ENCODE measurements at regions of chr17 and their contacts with region 1.

Region 1: DNA sequence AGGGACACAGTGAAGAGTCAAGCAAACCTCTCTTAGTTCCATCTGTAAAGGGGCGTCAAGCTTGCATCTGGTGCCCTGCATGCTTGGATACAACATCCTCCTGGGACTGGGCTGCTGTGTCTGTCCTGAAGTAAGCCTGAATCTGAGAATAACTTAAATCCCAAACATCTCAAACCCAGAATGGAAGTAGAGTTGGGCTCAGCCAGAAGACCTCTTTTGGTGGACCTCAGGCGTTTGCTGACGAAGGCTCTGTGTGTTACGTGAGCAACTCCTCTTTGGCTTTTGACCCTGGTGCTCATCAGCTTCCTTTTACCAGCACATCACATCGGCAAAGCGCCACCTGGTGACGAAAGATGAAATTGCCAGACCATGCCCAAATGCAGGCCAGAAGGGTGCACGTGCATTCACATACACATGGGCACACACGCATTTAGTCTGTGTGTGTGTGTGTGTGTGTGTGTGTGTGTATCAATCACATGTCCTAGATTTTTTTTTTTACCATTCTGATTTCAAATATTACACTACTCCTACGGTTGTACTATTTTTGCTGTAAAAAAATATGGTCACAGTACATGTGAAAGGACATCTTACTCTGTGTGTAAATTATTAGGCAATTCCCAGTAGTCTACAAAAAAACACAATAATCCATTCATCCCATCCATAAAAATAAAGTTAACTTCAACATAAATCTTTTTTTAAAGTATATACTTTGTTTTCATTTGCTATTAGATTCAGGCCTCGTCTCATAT is 41.1 kb upstream of the FOXJ1 start:
- DNase-seq: peak; percentile 94
- ATAC-seq: peak; percentile 90
- H3K4me3 Mint-ChIP-seq: no peak overlapping the region
- H3K27ac Mint-ChIP-seq: no peak overlapping the region
- H3K4me1 Mint-ChIP-seq: peaks cover 9% of the 10 kb centered on the region
- H3K27me3 Mint-ChIP-seq: peaks cover 4% of the 10 kb centered on the region; the same call in 1 of the 2 replicates
- CTCF ChIP-seq: peak; percentile 83

Region 2: GRCh38 chr17:76121932-76122430 is 60.2 kb before region 1 on chr17:
- CTCF ChIA-PET with region 1: interaction called, 61 read pairs
- POLR2A ChIA-PET with region 1: no interaction called
- DNase-seq: peak; percentile 54
- ATAC-seq: peak; percentile 5; the same call in 1 of the 2 replicates
- H3K4me3 Mint-ChIP-seq: no peak overlapping the region; the same call in 1 of the 2 replicates
- H3K27ac Mint-ChIP-seq: peak overlapping the region; percentile 19; the same call in 1 of the 2 replicates
- H3K4me1 Mint-ChIP-seq: peaks cover 39% of the 10 kb centered on the region
- H3K27me3 Mint-ChIP-seq: no peaks in the 10 kb centered on the region; the same call in none of the 2 replicates
- CTCF ChIP-seq: no peak

Region 3: GRCh38 chr17:76141212-76142038 is 40.8 kb before region 1 on chr17 and contains the start of gene FOXJ1:
- CTCF ChIA-PET with region 1: interaction called, 34 read pairs
- POLR2A ChIA-PET with region 1: no interaction called
- DNase-seq: peak; percentile 97
- ATAC-seq: peak; percentile 61
- H3K4me3 Mint-ChIP-seq: peak within 1 kb of the TSS; percentile 82
- H3K27ac Mint-ChIP-seq: no peak within 1 kb of the TSS
- H3K4me1 Mint-ChIP-seq: peaks cover 81% of the 10 kb centered on the region
- H3K27me3 Mint-ChIP-seq: peaks cover 67% of the 10 kb centered on the region
- CTCF ChIP-seq: no peak
- total RNA-seq, gene FOXJ1: 6.2 to 11.8 TPM (median 6.8 TPM) in 3 replicates

Region 4: GRCh38 chr17:76166168-76166567 is 16.0 kb before region 1 on chr17:
- CTCF ChIA-PET with region 1: interaction called, 12 read pairs
- POLR2A ChIA-PET with region 1: no interaction called
- DNase-seq: no peak
- ATAC-seq: no peak
- H3K4me3 Mint-ChIP-seq: no peak overlapping the region
- H3K27ac Mint-ChIP-seq: no peak overlapping the region
- H3K4me1 Mint-ChIP-seq: peaks cover 17% of the 10 kb centered on the region
- H3K27me3 Mint-ChIP-seq: no peaks in the 10 kb centered on the region
- CTCF ChIP-seq: no peak

Measured in WTC11 (cell line).